MCF 10A (cell line): ENCODE measurements at regions of chr12 and their contacts with region 1.

Region 1: DNA sequence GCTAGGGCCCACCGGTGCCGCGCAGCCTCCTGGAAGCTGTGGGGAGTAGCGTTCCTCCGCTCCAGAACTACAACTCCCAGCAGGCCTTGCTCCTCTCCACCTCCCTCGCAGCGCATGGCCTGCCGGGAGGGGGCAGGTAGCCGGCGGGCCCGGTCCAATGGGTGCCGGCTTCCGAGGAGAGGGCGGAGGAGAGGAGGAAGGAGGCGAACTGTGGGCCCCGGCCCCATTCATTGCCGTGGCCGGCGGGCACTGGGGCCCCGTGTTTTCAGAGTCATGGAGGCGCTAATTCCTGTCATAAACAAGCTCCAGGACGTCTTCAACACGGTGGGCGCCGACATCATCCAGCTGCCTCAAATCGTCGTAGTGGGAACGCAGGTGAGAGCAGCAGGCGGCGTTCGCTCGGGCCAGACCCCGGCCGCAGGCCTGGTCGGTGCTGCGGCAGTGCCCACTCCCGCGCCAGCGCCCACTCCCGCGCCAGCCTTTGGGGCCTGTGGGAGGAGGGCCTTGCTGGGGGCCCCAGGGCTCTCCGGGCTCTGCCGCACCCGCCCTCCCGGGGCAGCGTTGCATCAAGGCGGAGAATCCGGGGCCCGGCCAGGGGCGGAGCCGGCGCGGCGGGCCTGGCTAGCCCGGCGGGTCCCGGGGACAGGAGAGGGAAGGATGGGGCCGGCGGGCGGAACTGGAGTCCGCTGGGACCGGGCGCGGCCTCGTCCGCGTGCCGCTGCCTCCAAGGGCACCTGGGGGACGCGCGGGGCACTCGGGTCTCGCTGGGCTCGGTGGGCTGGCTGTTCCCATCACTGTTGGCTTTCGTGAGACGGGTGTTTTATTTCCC is at the start of gene DNM1L:
- DNase-seq: peak; percentile 97
- H3K4me3 Mint-ChIP-seq: peak within 1 kb of the TSS; percentile 92
- H3K27ac Mint-ChIP-seq: peak within 1 kb of the TSS; percentile 91
- H3K4me1 Mint-ChIP-seq: peaks cover 9% of the 10 kb centered on the region
- H3K27me3 Mint-ChIP-seq: no peaks in the 10 kb centered on the region
- CTCF ChIP-seq: no peak
- total RNA-seq, gene DNM1L: 72.5 and 86.9 TPM in 2 replicates

Region 2: GRCh38 chr12:32302218-32303173 is 376.8 kb before region 1 on chr12:
- CTCF ChIA-PET with region 1: no interaction called
- POLR2A ChIA-PET with region 1: no interaction called
- intact Hi-C with region 1: no loop called
- DNase-seq: peak; percentile 29
- H3K4me3 Mint-ChIP-seq: no peak overlapping the region
- H3K27ac Mint-ChIP-seq: no peak overlapping the region
- H3K4me1 Mint-ChIP-seq: no peaks in the 10 kb centered on the region
- H3K27me3 Mint-ChIP-seq: no peaks in the 10 kb centered on the region
- CTCF ChIP-seq: peak; percentile 28

Region 3: DNA sequence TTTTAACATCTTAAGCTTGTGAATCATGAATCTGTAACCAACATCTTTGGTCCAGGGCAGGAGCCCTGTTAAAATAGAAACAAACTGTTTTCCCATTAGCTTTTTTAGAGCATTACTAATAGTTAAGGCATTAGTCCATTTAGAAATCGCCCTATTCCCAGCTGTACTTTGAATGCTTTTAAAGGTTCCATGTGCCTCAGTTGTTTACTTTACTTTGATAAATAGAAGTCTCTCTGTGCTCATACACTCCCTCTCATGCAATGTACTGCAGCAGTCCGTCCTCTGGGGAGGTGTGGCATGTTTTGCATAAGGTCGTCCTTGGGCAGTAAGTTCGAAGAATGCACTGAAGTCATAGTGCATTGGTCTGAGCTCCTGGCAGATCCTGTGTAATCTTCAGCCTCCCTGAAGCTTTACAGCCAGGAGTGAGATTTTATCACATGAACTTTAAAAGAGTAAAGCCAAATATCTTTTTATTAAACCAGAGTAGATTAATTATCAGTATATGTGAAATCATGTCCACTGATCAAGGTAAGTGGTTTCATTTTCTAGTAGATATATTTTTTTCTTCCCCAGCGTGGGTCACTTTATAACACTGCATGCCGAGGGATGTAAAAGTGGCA is 145.2 kb before region 1 on chr12:
- CTCF ChIA-PET with region 1: no interaction called
- POLR2A ChIA-PET with region 1: no interaction called
- intact Hi-C with region 1: no loop called
- DNase-seq: peak; percentile 76
- H3K4me3 Mint-ChIP-seq: peak overlapping the region; percentile 65
- H3K27ac Mint-ChIP-seq: peak overlapping the region; percentile 63
- H3K4me1 Mint-ChIP-seq: peaks cover 43% of the 10 kb centered on the region
- H3K27me3 Mint-ChIP-seq: no peaks in the 10 kb centered on the region
- CTCF ChIP-seq: no peak

Region 4: DNA sequence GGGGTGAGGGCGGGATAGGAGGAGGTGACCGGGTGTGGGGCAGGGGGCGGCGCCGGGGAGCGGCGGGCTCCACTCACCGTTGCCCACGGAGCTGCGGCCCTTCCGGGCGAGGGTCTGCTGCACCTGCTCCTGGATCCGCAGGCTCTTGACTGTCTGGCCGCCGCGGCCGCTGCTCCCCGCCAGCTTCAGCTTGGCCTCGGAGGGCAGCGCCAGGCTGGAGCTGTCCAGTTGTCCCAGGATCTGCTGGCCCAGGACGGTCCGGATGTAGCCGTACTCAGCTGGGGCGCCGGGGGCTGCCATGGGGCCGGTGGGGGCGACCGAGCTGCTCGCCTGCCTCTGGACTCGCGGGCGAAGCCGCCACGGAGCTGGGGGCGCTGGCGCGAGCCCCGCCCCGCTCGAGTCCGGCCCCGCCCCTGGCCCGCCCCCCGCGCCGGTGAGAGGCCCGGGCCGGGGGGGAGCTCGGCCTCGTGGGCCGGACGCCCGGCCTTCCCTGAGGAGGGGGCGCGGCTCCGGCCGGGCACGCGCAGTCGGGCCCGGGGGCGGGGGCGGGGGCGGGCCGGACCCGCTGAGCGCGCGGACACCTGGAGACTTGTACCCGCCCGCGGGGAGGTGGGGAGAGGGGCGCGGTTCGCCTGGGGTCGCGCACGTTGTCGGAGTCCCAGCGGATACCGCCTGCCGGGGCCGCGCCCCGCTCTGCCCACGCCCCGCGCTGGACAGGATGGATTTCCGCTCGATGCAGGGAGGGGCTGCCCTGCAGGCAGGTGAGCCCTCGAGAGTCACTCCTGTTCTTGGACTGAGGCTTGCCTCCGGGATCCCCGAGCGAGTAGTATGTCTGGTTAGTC is 217.3 kb after region 1 on chr12 and contains the start of gene PKP2:
- CTCF ChIA-PET with region 1: no interaction called
- POLR2A ChIA-PET with region 1: no interaction called
- intact Hi-C with region 1: loop called (anchors 10 kb)
- DNase-seq: peak; percentile 88
- H3K4me3 Mint-ChIP-seq: peak within 1 kb of the TSS; percentile 94
- H3K27ac Mint-ChIP-seq: peak within 1 kb of the TSS; percentile 96
- H3K4me1 Mint-ChIP-seq: peaks cover 41% of the 10 kb centered on the region
- H3K27me3 Mint-ChIP-seq: no peaks in the 10 kb centered on the region
- CTCF ChIP-seq: no peak
- total RNA-seq, gene PKP2: 58.5 and 88.0 TPM in 2 replicates